Naive thymus-derived CD4-positive, alpha-beta T cell (primary cell): ENCODE measurements at regions of chr5 and their contacts with region 1.

Region 1: GRCh38 chr5:56200856-56201666 is 32.1 kb downstream of the ANKRD55 start:
- DNase-seq: peak; percentile 28 to 73 (median 59)
- ATAC-seq: peak; percentile 93
- H3K4me3 ChIP-seq: no peak overlapping the region
- H3K4me3 Mint-ChIP-seq: peak overlapping the region in 3 of 10 donors; percentile 2 to 27 (median 6)
- H3K27ac ChIP-seq: no peak overlapping the region
- H3K27ac Mint-ChIP-seq: peak overlapping the region in 7 of 9 donors; percentile 9 to 77 (median 63)
- H3K4me1 ChIP-seq: peaks cover 0 to 9% of the 10 kb centered on the region in 2 donors
- H3K4me1 Mint-ChIP-seq: peaks cover 17 to 34% (median 29%) of the 10 kb centered on the region in 7 donors
- H3K27me3 ChIP-seq: no peaks in the 10 kb centered on the region
- H3K27me3 Mint-ChIP-seq: no peaks in the 10 kb centered on the region

Region 2: GRCh38 chr5:55691265-55692105 is 509.6 kb before region 1 on chr5:
- CTCF ChIA-PET with region 1: interaction called, 3 read pairs
- POLR2A ChIA-PET with region 1: no interaction called
- intact Hi-C with region 1: loop called in 1 of 2 experiments (anchors 1 kb)
- DNase-seq: peak in 6 of 9 donors; percentile 35 to 59 (median 48)
- ATAC-seq: peak; percentile 65
- H3K4me3 ChIP-seq: no peak overlapping the region
- H3K4me3 Mint-ChIP-seq: no peak overlapping the region
- H3K27ac ChIP-seq: no peak overlapping the region
- H3K27ac Mint-ChIP-seq: no peak overlapping the region
- H3K4me1 ChIP-seq: peaks cover 0 to 3% of the 10 kb centered on the region in 2 donors
- H3K4me1 Mint-ChIP-seq: peaks cover 0 to 22% (median 6%) of the 10 kb centered on the region in 7 donors
- H3K27me3 ChIP-seq: no peaks in the 10 kb centered on the region
- H3K27me3 Mint-ChIP-seq: no peaks in the 10 kb centered on the region

Region 3: GRCh38 chr5:55959208-55959607 is 241.9 kb before region 1 on chr5:
- CTCF ChIA-PET with region 1: interaction called, 10 read pairs
- POLR2A ChIA-PET with region 1: no interaction called
- intact Hi-C with region 1: no loop called
- DNase-seq: peak in 1 of 9 donors; percentile 47
- ATAC-seq: peak; percentile 84
- H3K4me3 ChIP-seq: no peak overlapping the region
- H3K4me3 Mint-ChIP-seq: peak overlapping the region in 4 of 10 donors; percentile 13 to 34 (median 32)
- H3K27ac ChIP-seq: peak overlapping the region; percentile 48
- H3K27ac Mint-ChIP-seq: peak overlapping the region in 7 of 9 donors; percentile 49 to 89 (median 69)
- H3K4me1 ChIP-seq: peaks cover 0 to 4% of the 10 kb centered on the region in 2 donors
- H3K4me1 Mint-ChIP-seq: peaks cover 15 to 59% (median 30%) of the 10 kb centered on the region in 7 donors
- H3K27me3 ChIP-seq: no peaks in the 10 kb centered on the region
- H3K27me3 Mint-ChIP-seq: no peaks in the 10 kb centered on the region

Region 4: DNA sequence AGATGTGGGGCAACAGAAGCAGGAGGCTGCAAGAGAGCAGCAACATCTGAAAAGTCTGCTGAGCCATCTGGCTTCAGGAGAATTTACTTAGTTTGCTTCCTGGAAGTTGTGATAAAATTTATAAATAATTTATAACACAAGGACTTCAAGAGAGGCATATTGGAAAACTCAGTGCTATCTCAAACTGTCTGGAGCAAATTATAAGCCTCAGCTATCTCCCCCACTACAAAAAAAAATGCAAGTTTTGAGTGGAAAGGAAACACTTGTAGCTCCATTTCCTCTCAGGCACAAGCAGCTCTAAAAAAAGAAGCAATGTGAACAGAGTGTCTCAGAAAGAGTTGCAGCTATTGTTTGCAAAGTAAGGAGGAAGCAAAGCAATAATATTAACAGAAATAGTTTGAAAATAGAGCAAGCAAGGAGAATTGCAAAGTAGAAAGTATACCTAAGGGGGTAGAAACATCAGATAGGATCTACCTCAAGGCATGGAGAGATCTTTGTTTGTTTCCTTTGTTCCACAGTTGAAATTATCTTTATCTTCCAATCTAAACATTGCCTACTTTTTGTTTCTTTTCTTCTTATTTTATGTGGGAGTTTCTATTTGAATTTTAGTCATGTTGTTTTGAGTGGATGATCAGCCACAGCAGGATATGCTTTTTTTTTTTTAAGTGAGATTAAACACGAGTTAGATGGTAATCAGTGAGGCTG is 150.4 kb before region 1 on chr5:
- CTCF ChIA-PET with region 1: interaction called, 10 read pairs
- POLR2A ChIA-PET with region 1: no interaction called
- intact Hi-C with region 1: loop called in 1 of 2 experiments (anchors 5 kb)
- DNase-seq: peak in 8 of 9 donors; percentile 4 to 77 (median 66)
- ATAC-seq: peak; percentile 71
- H3K4me3 ChIP-seq: peak overlapping the region; percentile 34
- H3K4me3 Mint-ChIP-seq: peak overlapping the region; percentile 60 to 92 (median 76)
- H3K27ac ChIP-seq: peak overlapping the region; percentile 62
- H3K27ac Mint-ChIP-seq: peak overlapping the region; percentile 77 to 95 (median 89)
- H3K4me1 ChIP-seq: peaks cover 11 to 76% of the 10 kb centered on the region in 2 donors
- H3K4me1 Mint-ChIP-seq: peaks cover 40 to 95% (median 74%) of the 10 kb centered on the region in 7 donors
- H3K27me3 ChIP-seq: no peaks in the 10 kb centered on the region
- H3K27me3 Mint-ChIP-seq: peaks cover 0 to 5% (median 0%) of the 10 kb centered on the region in 5 donors

Region 5: GRCh38 chr5:56095579-56096102 is 105.4 kb before region 1 on chr5:
- CTCF ChIA-PET with region 1: interaction called, 23 read pairs
- POLR2A ChIA-PET with region 1: interaction called, 3 read pairs
- intact Hi-C with region 1: no loop called
- DNase-seq: no peak
- ATAC-seq: no peak
- H3K4me3 ChIP-seq: no peak overlapping the region
- H3K4me3 Mint-ChIP-seq: peak overlapping the region in 9 of 10 donors; percentile 32 to 77 (median 56)
- H3K27ac ChIP-seq: peak overlapping the region; percentile 54
- H3K27ac Mint-ChIP-seq: peak overlapping the region; percentile 66 to 100 (median 91)
- H3K4me1 ChIP-seq: peaks cover 0 to 94% of the 10 kb centered on the region in 2 donors
- H3K4me1 Mint-ChIP-seq: peaks cover 56 to 97% (median 86%) of the 10 kb centered on the region in 7 donors
- H3K27me3 ChIP-seq: no peaks in the 10 kb centered on the region
- H3K27me3 Mint-ChIP-seq: no peaks in the 10 kb centered on the region

Region 6: DNA sequence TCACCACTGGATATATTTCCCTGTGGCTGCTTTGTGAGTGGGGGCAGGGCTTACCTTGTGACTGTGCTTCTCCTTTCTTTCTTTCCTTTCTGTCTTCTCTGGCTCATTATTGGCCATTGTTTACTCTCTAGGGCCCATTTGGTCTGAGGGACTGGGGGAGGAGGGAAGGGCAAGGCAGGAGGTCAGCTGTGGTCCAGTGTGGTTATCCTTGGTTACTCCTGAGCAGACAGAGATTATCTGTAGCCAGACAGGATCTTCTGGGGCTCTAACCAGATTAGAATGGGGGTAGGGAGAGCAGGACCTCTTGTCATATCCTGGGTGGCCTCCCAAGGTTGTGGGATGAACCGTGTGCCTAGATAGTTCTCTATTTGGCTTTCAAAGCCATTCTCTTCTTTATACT is 39.1 kb before region 1 on chr5:
- CTCF ChIA-PET with region 1: interaction called, 5 read pairs
- POLR2A ChIA-PET with region 1: interaction called, 5 read pairs
- intact Hi-C with region 1: loop called (anchors 2 kb)
- DNase-seq: no peak
- ATAC-seq: no peak
- H3K4me3 ChIP-seq: no peak overlapping the region
- H3K4me3 Mint-ChIP-seq: peak overlapping the region in 5 of 10 donors; percentile 38 to 96 (median 93)
- H3K27ac ChIP-seq: peak overlapping the region; percentile 61
- H3K27ac Mint-ChIP-seq: peak overlapping the region; percentile 24 to 98 (median 95)
- H3K4me1 ChIP-seq: peaks cover 0 to 45% of the 10 kb centered on the region in 2 donors
- H3K4me1 Mint-ChIP-seq: peaks cover 42 to 93% (median 79%) of the 10 kb centered on the region in 7 donors
- H3K27me3 ChIP-seq: peaks cover 0 to 2% of the 10 kb centered on the region in 2 donors
- H3K27me3 Mint-ChIP-seq: peaks cover 0 to 2% (median 0%) of the 10 kb centered on the region in 5 donors

Region 7: GRCh38 chr5:56350598-56351170 is 149.6 kb after region 1 on chr5:
- CTCF ChIA-PET with region 1: no interaction called
- POLR2A ChIA-PET with region 1: no interaction called
- intact Hi-C with region 1: no loop called
- DNase-seq: no peak
- ATAC-seq: peak; percentile 31
- H3K4me3 ChIP-seq: no peak overlapping the region
- H3K4me3 Mint-ChIP-seq: no peak overlapping the region
- H3K27ac ChIP-seq: no peak overlapping the region
- H3K27ac Mint-ChIP-seq: no peak overlapping the region
- H3K4me1 ChIP-seq: no peaks in the 10 kb centered on the region
- H3K4me1 Mint-ChIP-seq: peaks cover 0 to 5% (median 0%) of the 10 kb centered on the region in 7 donors
- H3K27me3 ChIP-seq: no peaks in the 10 kb centered on the region
- H3K27me3 Mint-ChIP-seq: no peaks in the 10 kb centered on the region